Aorta (tissue), 5 donors: ENCODE measurements at regions of chr9 and their contacts with region 1.

Region 1: GRCh38 chr9:95268681-95269080 is 48.8 kb downstream of the FANCC start:
- DNase-seq: no peak
- ATAC-seq: peak; percentile 68
- H3K4me3 ChIP-seq: no peak overlapping the region
- H3K27ac ChIP-seq: no peak overlapping the region
- H3K4me1 ChIP-seq: no peaks in the 10 kb centered on the region
- H3K27me3 ChIP-seq: no peaks in the 10 kb centered on the region

Region 2: GRCh38 chr9:94668418-94668932 is 600.2 kb before region 1 on chr9:
- intact Hi-C with region 1: loop called in 1 of 2 experiments (anchors 5 kb)
- DNase-seq: no peak
- ATAC-seq: no peak
- H3K4me3 ChIP-seq: no peak overlapping the region
- H3K27ac ChIP-seq: no peak overlapping the region
- H3K4me1 ChIP-seq: no peaks in the 10 kb centered on the region
- H3K27me3 ChIP-seq: no peaks in the 10 kb centered on the region

Region 3: GRCh38 chr9:96217754-96218693 is 949.3 kb after region 1 on chr9:
- intact Hi-C with region 1: loop called in 1 of 2 experiments (anchors 10 kb)
- DNase-seq: peak; percentile 81 to 93
- ATAC-seq: peak; percentile 94
- H3K4me3 ChIP-seq: no peak overlapping the region
- H3K27ac ChIP-seq: no peak overlapping the region
- H3K4me1 ChIP-seq: no peaks in the 10 kb centered on the region
- H3K27me3 ChIP-seq: no peaks in the 10 kb centered on the region